ENCODE measurements at regions of chr1 and their contacts with region 1.

Region 1: DNA sequence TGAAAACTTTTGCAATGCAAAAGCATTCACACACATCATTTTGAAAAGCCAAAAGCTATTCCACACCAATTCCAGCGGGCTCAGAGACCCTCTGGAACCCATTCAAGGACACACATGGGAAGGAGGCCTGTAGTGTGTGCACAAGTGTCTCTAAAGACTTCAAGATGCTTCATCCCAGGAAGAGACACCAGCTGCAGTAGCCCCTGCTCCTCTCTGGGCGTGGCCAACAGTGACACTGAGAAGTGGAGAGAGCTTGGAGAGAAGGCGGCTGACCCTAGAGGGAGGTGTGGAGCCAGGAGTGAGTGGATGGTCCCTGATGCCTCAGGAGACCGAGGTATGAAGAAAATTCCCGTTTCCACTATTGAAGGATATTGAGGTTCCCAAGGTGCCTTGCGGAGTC is 14.9 kb upstream of the TNNI1 start:
- DNase-seq: no peak
- ATAC-seq: peak; percentile 89
- H3K4me3 ChIP-seq: no peak overlapping the region
- H3K27ac ChIP-seq: no peak overlapping the region
- H3K4me1 ChIP-seq: no peaks in the 10 kb centered on the region
- H3K27me3 ChIP-seq: no peaks in the 10 kb centered on the region
- CTCF ChIP-seq: no peak

Region 2: DNA sequence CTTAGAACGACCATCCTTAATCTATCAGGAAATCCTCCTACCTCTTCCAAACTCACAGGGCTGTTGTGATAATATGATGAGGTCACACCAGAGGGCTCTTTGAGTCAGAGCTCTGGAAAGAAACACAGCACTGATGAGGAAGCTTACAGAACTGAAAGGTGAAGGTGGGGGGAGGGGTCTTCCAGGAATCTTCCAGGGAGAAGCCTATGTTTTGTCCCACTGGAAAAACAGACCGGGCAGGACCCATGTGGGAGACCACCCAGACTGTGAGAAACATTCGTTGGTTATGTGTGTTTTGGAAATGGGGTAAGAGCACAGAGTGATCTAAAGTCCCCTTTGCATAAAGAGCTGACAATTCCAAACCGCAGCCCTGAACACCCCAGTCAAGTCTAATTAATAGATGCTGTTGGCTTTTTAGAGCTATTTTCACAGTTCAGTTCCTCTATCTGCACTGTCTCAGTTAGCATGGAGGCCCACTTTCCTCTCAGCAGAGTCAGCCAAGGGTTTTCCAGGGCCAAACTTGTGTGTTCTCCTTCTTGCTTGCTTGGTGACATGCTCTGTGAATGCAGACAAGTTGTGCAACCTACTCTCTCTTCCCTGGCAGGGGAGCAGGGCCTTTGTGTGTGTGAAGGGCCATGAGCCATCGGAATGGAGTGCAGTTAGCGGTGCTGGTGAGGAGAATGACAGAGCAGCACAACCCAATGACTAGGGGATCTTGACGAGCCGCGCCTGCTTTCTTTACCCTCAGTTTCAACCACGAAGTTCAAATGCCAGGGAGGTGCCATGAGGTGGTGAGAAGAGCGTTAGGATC is 20.3 kb after region 1 on chr1:
- CTCF ChIA-PET with region 1: interaction called, 12 read pairs
- POLR2A ChIA-PET with region 1: no interaction called
- in situ Hi-C with region 1: no loop called
- intact Hi-C with region 1: no loop called
- DNase-seq: peak; percentile 61
- ATAC-seq: peak; percentile 66
- H3K4me3 ChIP-seq: 0 out of 4 replicates have a peak overlapping the region, but pooled peaks of 1 of the 2 experiments have one; percentile 2
- H3K27ac ChIP-seq: peak overlapping the region; percentile 67
- H3K4me1 ChIP-seq: peaks cover 34% of the 10 kb centered on the region
- H3K27me3 ChIP-seq: no peaks in the 10 kb centered on the region
- CTCF ChIP-seq: no peak

Measured in Panc1 (cell line).